Right cardiac atrium (tissue), 5 donors: ENCODE measurements at regions of chr2 and their contacts with region 1.

Region 1: DNA sequence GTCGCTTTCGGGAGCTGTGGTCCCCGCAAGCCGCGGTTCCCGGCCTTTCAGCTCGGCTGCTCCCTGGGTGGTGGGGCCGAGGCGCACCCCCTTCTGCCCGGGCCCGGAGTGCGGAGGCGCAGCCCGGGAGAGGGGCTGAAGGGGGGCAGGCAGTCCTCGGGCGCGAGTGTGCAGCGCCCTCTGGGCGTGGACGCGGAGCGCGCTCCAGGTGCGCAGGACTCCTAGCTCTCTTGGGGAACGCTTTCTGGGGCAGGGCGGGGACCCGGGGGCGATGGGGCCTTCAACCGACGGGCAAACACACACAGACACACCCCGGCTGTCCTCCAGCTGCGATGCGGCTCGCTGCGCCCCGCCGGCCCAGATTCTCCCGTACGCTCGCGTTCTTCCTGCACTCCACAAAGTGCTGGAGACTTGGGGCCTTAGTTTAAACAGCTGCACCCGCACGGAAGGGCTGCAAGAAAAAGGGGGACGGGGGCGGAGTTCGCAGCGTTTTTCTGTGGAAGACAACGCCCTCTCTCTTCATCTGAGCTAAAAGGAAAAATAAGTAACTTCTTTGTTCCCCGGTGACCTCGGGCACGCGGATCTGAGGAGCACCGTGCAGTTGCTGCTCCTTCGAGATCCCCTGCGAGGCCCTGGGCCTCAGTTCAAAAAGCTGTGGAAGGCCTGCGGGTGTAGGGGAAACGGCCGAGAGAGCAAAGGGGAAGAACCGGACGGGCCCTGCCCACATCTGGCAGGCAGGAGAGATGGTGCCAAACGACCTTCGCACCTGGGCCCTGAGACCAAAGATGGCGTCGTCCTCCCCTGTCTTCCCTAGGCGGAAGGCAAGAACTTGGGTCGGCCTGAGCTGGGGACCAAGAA is 593 bp upstream of the SDC1 start:
- DNase-seq: peak in 1 of 3 donors; percentile 75
- ATAC-seq: peak; percentile 73 to 81
- H3K4me3 ChIP-seq: peak overlapping the region; percentile 68
- H3K27ac ChIP-seq: no peak overlapping the region
- H3K4me1 ChIP-seq: no peaks in the 10 kb centered on the region
- H3K27me3 ChIP-seq: no peaks in the 10 kb centered on the region

Region 2: DNA sequence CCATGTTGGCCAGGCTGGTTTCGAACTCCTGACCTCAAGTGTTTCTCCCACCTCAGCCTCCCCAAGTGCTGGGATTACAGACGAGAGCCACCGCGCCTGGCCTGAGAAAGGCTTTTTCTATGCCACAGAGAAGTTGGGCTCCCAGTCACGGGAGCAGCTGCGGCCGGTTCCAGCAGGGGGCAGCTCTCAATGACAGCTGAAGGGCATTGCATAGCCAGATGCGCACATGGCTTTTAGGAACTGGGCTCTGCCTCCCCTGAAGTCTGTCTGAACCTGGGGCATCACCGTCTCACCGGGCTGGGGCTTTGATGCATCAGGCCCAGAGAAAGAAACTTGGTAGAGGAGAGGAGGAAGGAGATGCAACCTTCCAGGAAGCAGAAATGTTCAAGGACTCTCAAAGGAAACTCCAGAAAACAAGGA is 89.9 kb before region 1 on chr2:
- intact Hi-C with region 1: loop called in 1 of 4 experiments (anchors 10 kb)
- DNase-seq: peak; percentile 63 to 82 (median 81)
- ATAC-seq: peak; percentile 46 to 63
- H3K4me3 ChIP-seq: no peak overlapping the region
- H3K27ac ChIP-seq: no peak overlapping the region
- H3K4me1 ChIP-seq: no peaks in the 10 kb centered on the region
- H3K27me3 ChIP-seq: no peaks in the 10 kb centered on the region